ENCODE measurements at regions of chr19 and their contacts with region 1.

Region 1: GRCh38 chr19:51097166-51097738 is 11.0 kb downstream of the CTU1 start:
- DNase-seq: peak; percentile 74 to 76 (median 76)
- ATAC-seq: peak; percentile 95
- H3K4me3 ChIP-seq: no peak overlapping the region
- H3K27ac ChIP-seq: no peak overlapping the region
- H3K4me1 ChIP-seq: no peaks in the 10 kb centered on the region; a peak in 1 of 5 replicates
- H3K27me3 ChIP-seq: peaks cover 0 to 2% of the 10 kb centered on the region in 2 experiments; a peak in 2 of 5 replicates
- CTCF ChIP-seq: peak; percentile 75 to 78 (median 78)
- EP300 ChIP-seq: no peak
- POLR2A ChIP-seq: no peak
- RAD21 ChIP-seq: peak in 1 of 2 experiments; percentile 57; a peak in 2 of 4 replicates

Region 2: DNA sequence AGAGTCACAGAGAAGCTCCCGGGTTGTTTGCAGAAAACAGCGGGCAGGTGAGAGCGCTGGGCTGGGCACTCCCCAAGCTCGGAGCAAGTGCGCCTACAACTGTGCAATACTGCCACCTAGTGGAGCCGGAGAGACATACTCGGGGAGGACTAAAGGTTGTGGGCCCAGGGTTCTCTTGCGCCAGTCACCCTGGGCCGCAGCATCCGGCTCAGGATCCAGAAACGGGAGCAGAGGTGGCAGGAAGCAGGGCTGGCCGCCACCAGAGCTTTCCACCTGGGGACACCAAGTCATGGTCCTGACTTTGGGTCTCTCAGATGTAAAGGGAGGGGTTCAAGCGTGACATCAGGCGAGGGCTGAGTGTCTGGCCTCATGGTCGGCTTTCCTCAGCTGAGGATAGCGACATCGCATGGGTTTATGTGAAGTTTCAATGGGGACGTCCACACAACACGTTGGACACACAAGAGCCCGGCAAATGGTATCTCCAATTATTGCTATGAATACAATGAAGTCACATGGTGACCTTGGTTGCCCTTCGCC is 174.9 kb before region 1 on chr19:
- CTCF ChIA-PET with region 1: interaction called, 5 read pairs
- POLR2A ChIA-PET with region 1: no interaction called
- in situ Hi-C with region 1: loop called (anchors 5 kb)
- intact Hi-C with region 1: no loop called
- DNase-seq: peak; percentile 84 to 89 (median 87)
- ATAC-seq: peak; percentile 100
- H3K4me3 ChIP-seq: no peak overlapping the region
- H3K27ac ChIP-seq: no peak overlapping the region
- H3K4me1 ChIP-seq: no peaks in the 10 kb centered on the region
- H3K27me3 ChIP-seq: peaks cover 6 to 23% of the 10 kb centered on the region in 2 experiments; a peak in 3 of 5 replicates
- CTCF ChIP-seq: peak; percentile 88 to 92 (median 91)
- EP300 ChIP-seq: no peak
- POLR2A ChIP-seq: no peak
- RAD21 ChIP-seq: peak; percentile 83 to 89

Region 3: GRCh38 chr19:50933640-50934039 is 163.6 kb before region 1 on chr19:
- CTCF ChIA-PET with region 1: interaction called, 15 read pairs
- POLR2A ChIA-PET with region 1: no interaction called
- in situ Hi-C with region 1: loop called (anchors 5 kb)
- intact Hi-C with region 1: loop called (anchors 2 kb)
- DNase-seq: peak in 1 of 4 experiments; percentile 51
- ATAC-seq: peak; percentile 53; the same call in 2 of the 3 replicates
- H3K4me3 ChIP-seq: no peak overlapping the region
- H3K27ac ChIP-seq: no peak overlapping the region
- H3K4me1 ChIP-seq: peaks cover 0 to 4% of the 10 kb centered on the region in 2 experiments; a peak in 2 of 5 replicates
- H3K27me3 ChIP-seq: peaks cover 0 to 14% of the 10 kb centered on the region in 2 experiments; a peak in 2 of 5 replicates
- CTCF ChIP-seq: no peak
- EP300 ChIP-seq: no peak
- POLR2A ChIP-seq: no peak
- RAD21 ChIP-seq: no peak

Region 4: GRCh38 chr19:51016798-51017683 is 80.2 kb before region 1 on chr19:
- CTCF ChIA-PET with region 1: interaction called, 35 read pairs
- POLR2A ChIA-PET with region 1: interaction called, 3 read pairs
- in situ Hi-C with region 1: loop called (anchors 5 kb)
- intact Hi-C with region 1: loop called (anchors 2 kb)
- DNase-seq: peak; percentile 80 to 85 (median 84)
- ATAC-seq: peak; percentile 91
- H3K4me3 ChIP-seq: no peak overlapping the region
- H3K27ac ChIP-seq: no peak overlapping the region
- H3K4me1 ChIP-seq: peaks cover 4 to 28% of the 10 kb centered on the region in 2 experiments
- H3K27me3 ChIP-seq: peaks cover 5 to 35% of the 10 kb centered on the region in 2 experiments; a peak in 3 of 5 replicates
- CTCF ChIP-seq: peak; percentile 89 to 94 (median 91)
- EP300 ChIP-seq: no peak
- POLR2A ChIP-seq: no peak
- RAD21 ChIP-seq: peak; percentile 45 to 74

Region 5: GRCh38 chr19:51131780-51132680 is 34.8 kb after region 1 on chr19:
- CTCF ChIA-PET with region 1: no interaction called
- POLR2A ChIA-PET with region 1: no interaction called
- in situ Hi-C with region 1: no loop called
- intact Hi-C with region 1: loop called (anchors 2 kb)
- DNase-seq: peak; percentile 67 to 84 (median 71)
- ATAC-seq: peak; percentile 88
- H3K4me3 ChIP-seq: no peak overlapping the region
- H3K27ac ChIP-seq: no peak overlapping the region
- H3K4me1 ChIP-seq: peaks cover 19 to 33% of the 10 kb centered on the region in 2 experiments
- H3K27me3 ChIP-seq: peaks cover 3 to 22% of the 10 kb centered on the region in 2 experiments; a peak in 2 of 5 replicates
- CTCF ChIP-seq: peak; percentile 55 to 70 (median 55)
- EP300 ChIP-seq: peak; percentile 59; the same call in 1 of the 2 replicates
- POLR2A ChIP-seq: no peak
- RAD21 ChIP-seq: peak; percentile 67 to 72

Region 6: GRCh38 chr19:51142119-51142518 is 44.9 kb after region 1 on chr19 and contains the start of gene SIGLEC7:
- CTCF ChIA-PET with region 1: no interaction called
- POLR2A ChIA-PET with region 1: no interaction called
- in situ Hi-C with region 1: no loop called
- intact Hi-C with region 1: no loop called
- DNase-seq: no peak
- ATAC-seq: no peak
- H3K4me3 ChIP-seq: no peak within 1 kb of the TSS
- H3K27ac ChIP-seq: no peak within 1 kb of the TSS
- H3K4me1 ChIP-seq: peaks cover 8 to 14% of the 10 kb centered on the region in 2 experiments
- H3K27me3 ChIP-seq: peaks cover 11 to 60% of the 10 kb centered on the region in 2 experiments; a peak in 4 of 5 replicates
- CTCF ChIP-seq: no peak
- EP300 ChIP-seq: no peak
- POLR2A ChIP-seq: no peak
- RAD21 ChIP-seq: no peak
- polyA plus RNA-seq, gene SIGLEC7: not detected

Measured in K562 (cell line).